A549 (cell line): ENCODE measurements at regions of chr3 and their contacts with region 1.

Region 1: GRCh38 chr3:132034486-132035464 is at the start of gene CPNE4:
- DNase-seq: peak; percentile 83 to 86
- ATAC-seq: peak; percentile 93 to 99
- H3K4me3 ChIP-seq: peak within 1 kb of the TSS; percentile 78
- H3K27ac ChIP-seq: peak within 1 kb of the TSS; percentile 76 to 81
- H3K4me1 ChIP-seq: peaks cover 29% of the 10 kb centered on the region
- CTCF ChIP-seq: peak; percentile 68
- EP300 ChIP-seq: no peak
- POLR2A ChIP-seq: no peak
- RAD21 ChIP-seq: peak; percentile 50 to 68
- polyA plus RNA-seq, gene CPNE4: 8.7 and 10.6 TPM in 2 replicates

Region 2: GRCh38 chr3:131794766-131795388 is 239.9 kb before region 1 on chr3:
- CTCF ChIA-PET with region 1: interaction called, 68 read pairs
- POLR2A ChIA-PET with region 1: no interaction called
- DNase-seq: peak; percentile 18 to 59
- ATAC-seq: peak; percentile 87 to 95
- H3K4me3 ChIP-seq: no peak overlapping the region
- H3K27ac ChIP-seq: no peak overlapping the region
- H3K4me1 ChIP-seq: no peaks in the 10 kb centered on the region
- CTCF ChIP-seq: peak; percentile 74
- EP300 ChIP-seq: no peak
- POLR2A ChIP-seq: no peak
- RAD21 ChIP-seq: peak; percentile 80 to 83

Region 3: GRCh38 chr3:131917006-131917405 is 117.8 kb before region 1 on chr3:
- CTCF ChIA-PET with region 1: no interaction called
- POLR2A ChIA-PET with region 1: no interaction called
- DNase-seq: no peak
- ATAC-seq: no peak
- H3K4me3 ChIP-seq: no peak overlapping the region
- H3K27ac ChIP-seq: no peak overlapping the region
- H3K4me1 ChIP-seq: no peaks in the 10 kb centered on the region
- CTCF ChIP-seq: no peak
- EP300 ChIP-seq: no peak
- POLR2A ChIP-seq: no peak
- RAD21 ChIP-seq: no peak

Region 4: GRCh38 chr3:132135628-132136333 is 101.0 kb after region 1 on chr3:
- CTCF ChIA-PET with region 1: interaction called, 12 read pairs
- POLR2A ChIA-PET with region 1: interaction called, 4 read pairs
- DNase-seq: peak; percentile 69 to 90
- ATAC-seq: peak; percentile 99 to 100
- H3K4me3 ChIP-seq: peak overlapping the region; percentile 31
- H3K27ac ChIP-seq: peak overlapping the region; percentile 93 to 94
- H3K4me1 ChIP-seq: peaks cover 38% of the 10 kb centered on the region
- CTCF ChIP-seq: no peak
- EP300 ChIP-seq: peak in 1 of 2 experiments; percentile 66; a peak in 1 of 5 replicates
- POLR2A ChIP-seq: no peak
- RAD21 ChIP-seq: 0 out of 5 replicates have a peak, but pooled peaks of 1 of the 2 experiments have one; percentile 29

Region 5: GRCh38 chr3:132164469-132165092 is 129.8 kb after region 1 on chr3:
- CTCF ChIA-PET with region 1: interaction called, 19 read pairs
- POLR2A ChIA-PET with region 1: no interaction called
- DNase-seq: peak; percentile 4 to 80
- ATAC-seq: peak; percentile 83 to 94
- H3K4me3 ChIP-seq: no peak overlapping the region
- H3K27ac ChIP-seq: peak overlapping the region; percentile 68 to 76
- H3K4me1 ChIP-seq: peaks cover 24% of the 10 kb centered on the region
- CTCF ChIP-seq: no peak
- EP300 ChIP-seq: peak; percentile 54 to 80; a peak in 3 of 5 replicates
- POLR2A ChIP-seq: no peak
- RAD21 ChIP-seq: peak; percentile 1 to 45; a peak in 3 of 5 replicates

Region 6: DNA sequence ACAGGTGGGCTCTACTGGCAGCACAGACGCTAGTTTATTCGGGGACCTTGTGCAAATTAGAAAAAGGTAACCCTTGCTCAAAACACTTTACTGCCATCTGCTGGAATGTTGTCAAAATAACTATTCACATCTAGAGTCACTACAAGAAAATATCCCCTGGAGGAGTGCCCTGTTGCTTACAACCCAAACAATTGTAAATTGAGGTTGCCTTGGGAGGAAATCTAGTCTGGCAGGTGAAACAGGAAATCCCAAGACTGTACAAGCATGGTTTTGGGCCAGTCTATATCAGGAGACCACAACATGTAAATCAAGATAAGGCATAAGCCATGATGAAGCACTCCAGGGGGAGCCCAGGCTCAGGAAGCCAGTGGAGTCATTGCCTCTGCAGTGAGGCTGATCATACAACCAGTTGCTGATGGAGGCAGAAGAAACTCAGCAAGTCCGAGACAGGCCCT is 145.6 kb after region 1 on chr3:
- CTCF ChIA-PET with region 1: interaction called, 240 read pairs
- POLR2A ChIA-PET with region 1: no interaction called
- DNase-seq: peak; percentile 29 to 65
- ATAC-seq: peak; percentile 87 to 92; a peak in 5 of 6 replicates
- H3K4me3 ChIP-seq: no peak overlapping the region
- H3K27ac ChIP-seq: peak overlapping the region; percentile 50 to 55; a peak in 5 of 6 replicates
- H3K4me1 ChIP-seq: peaks cover 11% of the 10 kb centered on the region; the same call in 2 of the 3 replicates
- CTCF ChIP-seq: peak; percentile 81
- EP300 ChIP-seq: no peak
- POLR2A ChIP-seq: no peak
- RAD21 ChIP-seq: peak; percentile 88 to 94

Region 7: GRCh38 chr3:132210476-132211346 is 175.9 kb after region 1 on chr3:
- CTCF ChIA-PET with region 1: interaction called, 43 read pairs
- POLR2A ChIA-PET with region 1: no interaction called
- DNase-seq: peak; percentile 19 to 44
- ATAC-seq: peak; percentile 70 to 88; a peak in 5 of 6 replicates
- H3K4me3 ChIP-seq: no peak overlapping the region
- H3K27ac ChIP-seq: no peak overlapping the region
- H3K4me1 ChIP-seq: peaks cover 12% of the 10 kb centered on the region; the same call in 2 of the 3 replicates
- CTCF ChIP-seq: peak; percentile 76
- EP300 ChIP-seq: no peak
- POLR2A ChIP-seq: no peak
- RAD21 ChIP-seq: peak; percentile 75 to 90

Region 8: GRCh38 chr3:132432639-132433038 is 397.9 kb after region 1 on chr3:
- CTCF ChIA-PET with region 1: no interaction called
- POLR2A ChIA-PET with region 1: no interaction called
- DNase-seq: peak; percentile 13 to 17
- ATAC-seq: peak in 1 of 2 experiments; percentile 59; a peak in 2 of 6 replicates
- H3K4me3 ChIP-seq: no peak overlapping the region
- H3K27ac ChIP-seq: peak overlapping the region; percentile 8 to 73; a peak in 3 of 6 replicates
- H3K4me1 ChIP-seq: peaks cover 13% of the 10 kb centered on the region
- CTCF ChIP-seq: no peak
- EP300 ChIP-seq: no peak
- POLR2A ChIP-seq: no peak
- RAD21 ChIP-seq: no peak

Region 9: DNA sequence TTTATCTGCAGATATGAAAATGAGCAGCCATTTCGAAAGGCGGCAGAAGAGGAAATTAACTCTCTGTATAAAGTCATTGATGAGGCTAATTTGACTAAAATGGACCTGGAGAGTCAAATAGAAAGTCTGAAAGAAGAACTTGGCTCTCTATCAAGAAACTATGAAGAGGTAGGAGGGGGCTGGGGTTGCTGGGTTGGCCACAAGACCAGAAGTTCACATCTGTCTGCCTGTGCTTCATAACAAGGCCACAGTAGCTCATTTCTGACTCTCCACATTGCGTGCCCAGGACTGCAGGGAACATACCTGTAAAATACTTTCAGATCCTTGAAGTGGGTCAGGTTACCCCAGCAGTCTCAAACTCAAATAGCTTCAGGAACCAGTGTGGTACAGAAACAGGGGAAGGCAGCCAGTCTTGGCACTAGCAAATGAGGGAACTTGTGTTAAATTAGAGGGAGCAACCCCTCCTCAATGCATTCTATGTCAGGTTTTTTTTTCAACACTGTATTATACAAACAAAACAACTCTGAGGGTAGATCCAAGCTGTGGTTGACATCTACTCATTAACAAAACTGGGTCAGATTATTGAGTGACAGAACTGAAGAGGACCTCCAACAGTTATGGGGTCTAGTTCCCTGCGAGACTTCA is 1413.8 kb after region 1 on chr3:
- CTCF ChIA-PET with region 1: no interaction called
- POLR2A ChIA-PET with region 1: no interaction called
- DNase-seq: no peak
- ATAC-seq: no peak
- H3K4me3 ChIP-seq: no peak overlapping the region
- H3K27ac ChIP-seq: no peak overlapping the region
- H3K4me1 ChIP-seq: peaks cover 34% of the 10 kb centered on the region
- CTCF ChIP-seq: no peak
- EP300 ChIP-seq: no peak
- POLR2A ChIP-seq: no peak
- RAD21 ChIP-seq: no peak